PC-3 (cell line): ENCODE measurements at regions of chr11 and their contacts with region 1.

Region 1: GRCh38 chr11:96215110-96215782 is 127.7 kb downstream of the MAML2 start:
- DNase-seq: peak; percentile 44
- ATAC-seq: peak; percentile 53
- H3K4me3 ChIP-seq: no peak overlapping the region
- H3K27ac ChIP-seq: peak overlapping the region; percentile 81
- H3K4me1 ChIP-seq: peaks cover 43% of the 10 kb centered on the region
- H3K27me3 ChIP-seq: no peaks in the 10 kb centered on the region
- CTCF ChIP-seq: no peak

Region 2: GRCh38 chr11:96242971-96243647 is 27.9 kb after region 1 on chr11:
- CTCF ChIA-PET with region 1: no interaction called
- POLR2A ChIA-PET with region 1: interaction called, 13 read pairs
- intact Hi-C with region 1: no loop called
- DNase-seq: peak; percentile 95
- ATAC-seq: peak; percentile 97
- H3K4me3 ChIP-seq: peak overlapping the region; percentile 58
- H3K27ac ChIP-seq: peak overlapping the region; percentile 80
- H3K4me1 ChIP-seq: peaks cover 43% of the 10 kb centered on the region
- H3K27me3 ChIP-seq: no peaks in the 10 kb centered on the region
- CTCF ChIP-seq: no peak

Region 3: DNA sequence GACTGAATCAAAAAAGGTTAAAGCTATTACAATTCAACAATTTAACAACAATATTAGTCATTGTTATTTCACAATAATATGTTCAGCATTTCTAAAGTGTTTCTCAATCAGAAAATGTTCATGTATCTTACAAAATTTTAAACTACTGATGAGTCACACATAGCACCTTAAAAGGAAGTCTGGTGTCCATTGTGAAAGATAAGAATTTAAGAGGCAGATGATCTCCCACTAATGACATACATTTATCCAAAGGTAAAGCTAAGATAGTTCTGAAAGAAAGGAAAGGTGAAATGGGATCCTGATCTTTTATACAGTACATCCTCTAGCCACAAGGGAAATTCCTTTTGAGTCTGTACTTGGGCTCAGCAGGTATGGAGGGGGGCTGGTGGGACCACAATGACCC is 48.1 kb after region 1 on chr11:
- CTCF ChIA-PET with region 1: interaction called, 3 read pairs
- POLR2A ChIA-PET with region 1: no interaction called
- intact Hi-C with region 1: loop called (anchors 5 kb)
- DNase-seq: peak; percentile 89
- ATAC-seq: peak; percentile 8
- H3K4me3 ChIP-seq: no peak overlapping the region
- H3K27ac ChIP-seq: peak overlapping the region; percentile 25
- H3K4me1 ChIP-seq: peaks cover 53% of the 10 kb centered on the region
- H3K27me3 ChIP-seq: no peaks in the 10 kb centered on the region
- CTCF ChIP-seq: no peak